ENCODE measurements at regions of chr2 and their contacts with region 1.

Region 1: GRCh38 chr2:223613017-223613950 is 11.1 kb upstream of the SCG2 start:
- DNase-seq: peak; percentile 94
- H3K4me3 ChIP-seq: peak overlapping the region in 1 of 3 experiments; percentile 41
- H3K27ac ChIP-seq: peak overlapping the region; percentile 30
- H3K4me1 ChIP-seq: peaks cover 10% of the 10 kb centered on the region
- H3K27me3 ChIP-seq: peaks cover under 1 to 2% of the 10 kb centered on the region in 2 experiments
- CTCF ChIP-seq: peak in 1 of 2 donors; percentile 8
- POLR2A ChIP-seq: no peak

Region 2: DNA sequence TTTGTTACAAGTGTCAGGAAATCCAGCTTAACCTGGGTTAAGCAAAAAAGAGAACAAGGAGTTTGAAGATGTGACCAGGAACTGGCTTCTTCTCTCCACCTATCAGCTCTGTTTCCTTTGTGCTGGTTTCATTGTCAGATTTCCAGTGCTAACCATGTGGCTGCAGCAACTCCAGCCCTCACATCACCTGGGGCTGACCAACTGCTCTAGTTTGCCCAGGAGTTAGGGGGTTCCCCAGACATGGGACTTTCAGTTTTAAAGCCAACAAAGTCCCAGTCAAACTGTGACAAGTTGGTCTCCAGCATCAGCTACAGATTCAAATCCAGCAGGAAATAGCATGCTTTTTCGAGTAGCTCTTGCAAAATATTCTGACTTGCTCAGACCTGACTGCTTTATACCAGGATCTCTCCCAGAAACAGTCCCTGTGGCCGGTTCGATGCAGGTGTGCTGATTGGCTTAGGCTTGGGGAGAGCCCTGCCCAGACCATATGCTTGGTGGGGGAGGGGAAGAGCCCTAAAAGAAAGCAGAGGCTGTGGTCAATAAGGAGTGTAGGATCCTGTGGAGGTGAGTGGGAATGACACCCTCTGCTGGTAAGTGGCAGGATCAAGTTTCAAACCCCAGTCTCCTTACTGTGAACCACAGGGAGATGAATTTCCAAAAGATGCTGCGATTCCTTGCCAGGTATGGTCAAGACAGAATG is 511.8 kb before region 1 on chr2:
- CTCF ChIA-PET with region 1: no interaction called
- POLR2A ChIA-PET with region 1: no interaction called
- dilution Hi-C with region 1: no loop called
- intact Hi-C with region 1: loop called (anchors 10 kb)
- DNase-seq: peak; percentile 51
- H3K4me3 ChIP-seq: no peak overlapping the region
- H3K27ac ChIP-seq: no peak overlapping the region
- H3K4me1 ChIP-seq: no peaks in the 10 kb centered on the region
- H3K27me3 ChIP-seq: no peaks in the 10 kb centered on the region
- CTCF ChIP-seq: peak; percentile 24 to 52
- POLR2A ChIP-seq: no peak

Region 3: DNA sequence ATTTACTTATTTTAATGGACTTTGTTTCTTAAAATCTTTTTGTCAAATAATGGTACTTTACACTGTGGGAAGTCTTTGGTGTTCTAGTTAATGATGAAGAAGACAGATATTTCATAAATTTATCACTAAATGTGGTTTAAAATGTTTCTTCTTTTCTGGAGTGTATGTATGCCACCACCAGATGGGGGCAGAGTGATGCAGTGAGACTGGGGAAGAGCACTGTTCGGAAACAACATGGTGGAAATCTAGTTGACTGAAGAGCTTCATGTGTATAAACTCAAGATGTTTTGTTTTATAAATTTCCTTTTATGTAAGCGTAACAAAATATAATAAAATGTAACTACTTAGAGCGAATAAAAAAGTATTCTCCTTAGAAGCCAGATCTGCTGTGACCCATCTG is 366.1 kb before region 1 on chr2:
- CTCF ChIA-PET with region 1: no interaction called
- POLR2A ChIA-PET with region 1: no interaction called
- dilution Hi-C with region 1: no loop called
- intact Hi-C with region 1: loop called (anchors 10 kb)
- DNase-seq: peak; percentile 40
- H3K4me3 ChIP-seq: no peak overlapping the region
- H3K27ac ChIP-seq: no peak overlapping the region
- H3K4me1 ChIP-seq: no peaks in the 10 kb centered on the region
- H3K27me3 ChIP-seq: no peaks in the 10 kb centered on the region
- CTCF ChIP-seq: peak; percentile 16 to 33
- POLR2A ChIP-seq: no peak

Region 4: DNA sequence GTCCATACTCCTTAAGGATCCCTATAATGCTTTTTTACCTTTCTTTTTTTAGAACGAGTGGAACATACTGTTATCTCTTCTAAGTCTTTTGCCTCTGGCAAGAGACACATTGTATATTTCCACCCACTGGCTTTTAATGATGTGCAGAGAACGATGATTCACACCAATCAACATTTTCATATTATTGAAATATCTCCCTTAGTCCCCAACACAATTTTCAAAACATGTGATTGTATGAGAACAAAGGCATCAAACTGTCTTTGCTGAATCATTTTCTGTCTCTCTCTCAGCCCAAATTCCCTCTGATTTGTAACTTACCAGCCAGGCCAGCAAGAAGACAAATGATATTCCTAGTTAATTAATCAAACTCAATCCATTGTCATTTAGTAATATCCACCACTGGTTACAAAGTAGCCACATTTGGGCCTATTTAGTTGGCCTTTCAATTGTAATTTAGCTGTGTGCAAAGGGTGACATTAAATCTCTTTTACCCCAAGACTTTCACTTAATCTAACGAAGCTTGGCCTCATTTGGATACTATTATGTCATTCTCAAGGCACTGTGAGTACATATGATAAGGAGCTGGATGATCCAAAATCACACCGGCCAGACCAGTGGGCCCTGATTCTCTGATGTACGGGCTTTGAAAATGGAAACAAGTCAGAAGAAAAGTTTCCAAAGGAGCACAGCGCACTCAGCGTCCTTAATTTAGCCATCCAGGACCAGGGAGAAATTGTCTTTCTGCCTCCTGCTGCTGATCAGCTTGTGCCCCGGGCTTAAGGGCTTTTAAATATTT is 196.3 kb before region 1 on chr2:
- CTCF ChIA-PET with region 1: no interaction called
- POLR2A ChIA-PET with region 1: no interaction called
- dilution Hi-C with region 1: no loop called
- intact Hi-C with region 1: no loop called
- DNase-seq: no peak
- H3K4me3 ChIP-seq: no peak overlapping the region
- H3K27ac ChIP-seq: no peak overlapping the region
- H3K4me1 ChIP-seq: no peaks in the 10 kb centered on the region
- H3K27me3 ChIP-seq: no peaks in the 10 kb centered on the region
- CTCF ChIP-seq: no peak
- POLR2A ChIP-seq: no peak

Region 5: GRCh38 chr2:223549215-223549614 is 64.1 kb before region 1 on chr2:
- CTCF ChIA-PET with region 1: no interaction called
- POLR2A ChIA-PET with region 1: no interaction called
- dilution Hi-C with region 1: no loop called
- intact Hi-C with region 1: loop called (anchors 1 kb)
- DNase-seq: peak; percentile 88
- H3K4me3 ChIP-seq: no peak overlapping the region
- H3K27ac ChIP-seq: no peak overlapping the region
- H3K4me1 ChIP-seq: peaks cover 10% of the 10 kb centered on the region
- H3K27me3 ChIP-seq: peaks cover 0 to 22% of the 10 kb centered on the region in 2 experiments
- CTCF ChIP-seq: no peak
- POLR2A ChIP-seq: peak; percentile 47

Region 6: GRCh38 chr2:223563462-223563861 is 49.8 kb before region 1 on chr2:
- CTCF ChIA-PET with region 1: no interaction called
- POLR2A ChIA-PET with region 1: no interaction called
- dilution Hi-C with region 1: no loop called
- intact Hi-C with region 1: loop called (anchors 1 kb)
- DNase-seq: peak; percentile 73
- H3K4me3 ChIP-seq: no peak overlapping the region
- H3K27ac ChIP-seq: peak overlapping the region; percentile 23
- H3K4me1 ChIP-seq: peaks cover 8% of the 10 kb centered on the region
- H3K27me3 ChIP-seq: peaks cover 0 to 2% of the 10 kb centered on the region in 2 experiments
- CTCF ChIP-seq: no peak
- POLR2A ChIP-seq: no peak

Region 7: GRCh38 chr2:223815186-223815883 is 202.1 kb after region 1 on chr2:
- CTCF ChIA-PET with region 1: no interaction called
- POLR2A ChIA-PET with region 1: no interaction called
- dilution Hi-C with region 1: no loop called
- intact Hi-C with region 1: loop called (anchors 1 kb)
- DNase-seq: peak; percentile 97
- H3K4me3 ChIP-seq: no peak overlapping the region
- H3K27ac ChIP-seq: peak overlapping the region; percentile 49
- H3K4me1 ChIP-seq: peaks cover 25% of the 10 kb centered on the region
- H3K27me3 ChIP-seq: no peaks in the 10 kb centered on the region
- CTCF ChIP-seq: no peak
- POLR2A ChIP-seq: no peak